CD14-positive monocyte (primary cell): ENCODE measurements at regions of chr10 and their contacts with region 1.

Region 1: GRCh38 chr10:124612611-124613498 is 131.3 kb downstream of the FAM53B start:
- DNase-seq: no peak
- H3K4me3 ChIP-seq: no peak overlapping the region
- H3K4me3 Mint-ChIP-seq: peak overlapping the region; percentile 32 to 84
- H3K27ac ChIP-seq: peak overlapping the region; percentile 11 to 62
- H3K27ac Mint-ChIP-seq: peak overlapping the region in 5 of 7 donors; percentile 51 to 89 (median 82)
- H3K4me1 ChIP-seq: peaks cover 23% of the 10 kb centered on the region in 2 donors
- H3K4me1 Mint-ChIP-seq: peaks cover 28% of the 10 kb centered on the region
- H3K27me3 ChIP-seq: no peaks in the 10 kb centered on the region
- H3K27me3 Mint-ChIP-seq: peaks cover 0 to 3% (median 2%) of the 10 kb centered on the region in 3 donors
- CTCF ChIP-seq: no peak

Region 2: DNA sequence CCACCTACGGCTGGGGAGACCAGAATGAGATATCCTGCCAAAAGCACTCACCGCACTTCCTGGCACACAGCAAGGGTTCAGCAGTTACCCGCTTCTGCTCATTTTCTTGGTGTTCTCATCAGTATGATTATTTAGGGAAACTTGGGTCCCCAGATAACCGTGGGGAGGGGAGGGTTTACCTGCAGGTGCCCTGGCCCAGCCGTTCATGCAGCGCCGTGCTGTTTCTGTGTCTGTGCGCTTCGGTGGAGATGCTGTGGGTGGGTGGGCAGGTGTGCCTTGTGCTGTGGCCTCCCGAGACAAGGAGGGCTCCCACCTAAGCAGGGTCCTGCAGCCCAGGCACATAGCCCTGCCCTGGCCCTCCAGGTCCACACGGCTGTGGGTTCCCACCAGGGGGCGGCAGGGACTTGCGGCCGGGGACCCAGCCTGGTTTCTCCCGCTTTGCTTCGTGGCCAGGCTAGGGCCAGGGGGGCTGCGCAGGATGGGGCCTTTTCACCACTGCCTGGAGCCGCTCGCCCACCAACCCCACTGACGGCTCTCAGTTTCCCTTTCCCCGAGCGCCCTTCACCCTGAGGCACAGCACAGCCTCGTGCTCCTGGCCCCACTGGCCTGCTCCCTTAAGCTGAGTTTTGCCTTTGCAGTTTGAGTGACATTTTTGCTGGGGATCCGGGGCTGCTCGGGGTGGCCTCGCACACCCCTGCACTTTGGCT is 72.8 kb before region 1 on chr10:
- intact Hi-C with region 1: loop called in 1 of 2 experiments (anchors 10 kb)
- DNase-seq: peak; percentile 21 to 47 (median 30)
- H3K4me3 ChIP-seq: no peak overlapping the region
- H3K4me3 Mint-ChIP-seq: no peak overlapping the region
- H3K27ac ChIP-seq: no peak overlapping the region
- H3K27ac Mint-ChIP-seq: peak overlapping the region in 1 of 7 donors; percentile 57
- H3K4me1 ChIP-seq: peaks cover 16 to 17% of the 10 kb centered on the region in 2 donors
- H3K4me1 Mint-ChIP-seq: peaks cover 27% of the 10 kb centered on the region
- H3K27me3 ChIP-seq: no peaks in the 10 kb centered on the region
- H3K27me3 Mint-ChIP-seq: peaks cover 0 to 2% (median 2%) of the 10 kb centered on the region in 3 donors
- CTCF ChIP-seq: peak; percentile 77